ENCODE measurements at regions of chr7 and their contacts with region 1.

Region 1: DNA sequence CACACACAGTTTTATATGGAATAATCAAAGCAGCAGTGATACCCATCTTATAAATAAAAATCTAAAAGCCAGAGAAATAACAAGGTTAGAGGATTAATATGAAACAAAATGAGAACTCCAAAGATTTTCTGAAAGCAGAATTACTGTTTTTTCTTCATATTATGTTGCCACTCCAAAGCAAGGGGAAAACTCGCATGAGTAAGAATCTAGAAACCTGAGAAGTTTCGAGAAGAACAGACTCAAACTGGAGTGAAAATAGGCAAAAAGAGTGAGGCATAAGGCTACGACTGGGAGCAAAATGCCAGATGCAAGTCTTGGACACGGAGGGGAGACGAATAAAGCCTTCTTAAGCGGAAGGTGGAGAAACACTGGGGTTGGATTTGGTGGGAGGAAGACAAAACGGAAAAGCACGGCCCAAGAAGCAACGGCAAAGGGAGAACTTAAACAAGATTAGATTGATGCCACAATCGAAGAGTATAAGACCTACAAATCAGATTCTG is 923 bp downstream of the TNPO3 start:
- DNase-seq: peak; percentile 25
- H3K4me3 ChIP-seq: peak overlapping the region; percentile 81
- H3K27ac ChIP-seq: peak overlapping the region; percentile 94
- H3K4me1 ChIP-seq: peaks cover 9% of the 10 kb centered on the region
- H3K27me3 ChIP-seq: no peaks in the 10 kb centered on the region
- CTCF ChIP-seq: no peak

Region 2: DNA sequence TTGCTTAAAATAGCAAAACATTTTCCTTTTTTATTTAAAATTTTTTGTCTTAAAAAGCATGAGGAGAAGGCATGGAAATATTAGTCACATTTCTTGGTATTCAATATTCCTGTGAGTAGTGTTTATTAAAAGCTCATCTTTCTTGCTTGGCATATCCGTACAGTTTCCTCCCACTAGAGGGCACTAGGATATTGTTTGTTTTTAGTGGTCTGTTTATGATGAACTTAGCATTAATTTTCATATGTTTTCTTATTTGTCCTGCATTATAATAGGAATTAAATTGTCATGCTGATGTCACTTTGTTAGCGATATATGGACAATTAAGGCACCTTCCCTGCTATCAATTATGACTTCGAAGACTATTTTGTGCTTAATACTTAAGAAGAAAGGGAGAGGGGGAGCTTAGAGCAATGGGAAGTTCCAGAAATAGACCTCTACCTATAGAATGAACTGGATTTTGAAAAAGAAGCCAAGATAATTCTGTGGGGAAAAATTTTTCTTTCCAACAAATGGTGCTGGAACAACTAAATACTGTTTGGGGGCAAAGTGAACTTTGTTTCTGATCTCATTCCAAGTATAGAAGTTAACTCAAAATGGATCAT is 289.2 kb after region 1 on chr7:
- CTCF ChIA-PET with region 1: interaction called, 10 read pairs
- POLR2A ChIA-PET with region 1: no interaction called
- intact Hi-C with region 1: no loop called
- DNase-seq: peak; percentile 59
- H3K4me3 ChIP-seq: no peak overlapping the region
- H3K27ac ChIP-seq: no peak overlapping the region
- H3K4me1 ChIP-seq: no peaks in the 10 kb centered on the region
- H3K27me3 ChIP-seq: no peaks in the 10 kb centered on the region
- CTCF ChIP-seq: peak; percentile 83